Activated CD4-positive, alpha-beta memory T cell treated with anti-CD3 and anti-CD28 coated beads, Interleukin-2, amount 10 ng/mL, durations not matched to agents 7 days and 5 days (primary cell): ENCODE measurements at regions of chr1 and their contacts with region 1.

Region 1: DNA sequence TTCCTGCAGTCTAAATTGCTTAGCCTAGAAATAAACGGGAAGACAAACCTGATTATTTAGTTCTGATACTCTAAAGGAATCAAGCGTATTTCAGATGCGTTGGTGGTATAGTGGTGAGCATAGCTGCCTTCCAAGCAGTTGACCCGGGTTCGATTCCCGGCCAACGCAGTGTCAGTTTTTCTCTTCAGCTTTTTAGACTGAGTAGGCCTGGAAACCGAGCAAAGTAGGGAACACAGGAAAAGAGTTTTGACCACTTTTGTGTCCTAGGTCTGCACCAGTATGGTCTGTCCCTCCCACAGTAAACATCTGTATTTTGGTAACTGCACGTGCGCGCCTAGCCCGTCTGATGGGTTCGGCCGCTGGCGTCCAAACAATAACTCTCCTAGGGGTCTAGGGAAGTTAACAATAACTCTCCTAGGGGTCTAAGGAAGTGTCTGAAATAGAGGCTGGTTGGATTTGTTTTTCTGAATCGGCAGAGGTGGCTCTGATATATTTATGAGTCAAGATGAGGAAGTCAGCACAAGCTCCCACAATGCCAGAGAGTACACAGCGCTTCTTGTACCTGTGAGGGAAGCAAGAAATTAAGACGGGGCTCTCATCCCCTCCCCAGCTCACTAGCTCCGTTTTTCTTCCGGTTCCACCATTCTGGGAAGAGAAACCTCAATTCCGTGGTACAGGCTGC is 15.6 kb upstream of the HJV start:
- DNase-seq: peak; percentile 85
- H3K4me3 Mint-ChIP-seq: peak overlapping the region; percentile 90
- H3K27ac Mint-ChIP-seq: peak overlapping the region; percentile 93
- H3K4me1 Mint-ChIP-seq: peaks cover 51% of the 10 kb centered on the region
- H3K27me3 Mint-ChIP-seq: peaks cover 7% of the 10 kb centered on the region

Region 2: DNA sequence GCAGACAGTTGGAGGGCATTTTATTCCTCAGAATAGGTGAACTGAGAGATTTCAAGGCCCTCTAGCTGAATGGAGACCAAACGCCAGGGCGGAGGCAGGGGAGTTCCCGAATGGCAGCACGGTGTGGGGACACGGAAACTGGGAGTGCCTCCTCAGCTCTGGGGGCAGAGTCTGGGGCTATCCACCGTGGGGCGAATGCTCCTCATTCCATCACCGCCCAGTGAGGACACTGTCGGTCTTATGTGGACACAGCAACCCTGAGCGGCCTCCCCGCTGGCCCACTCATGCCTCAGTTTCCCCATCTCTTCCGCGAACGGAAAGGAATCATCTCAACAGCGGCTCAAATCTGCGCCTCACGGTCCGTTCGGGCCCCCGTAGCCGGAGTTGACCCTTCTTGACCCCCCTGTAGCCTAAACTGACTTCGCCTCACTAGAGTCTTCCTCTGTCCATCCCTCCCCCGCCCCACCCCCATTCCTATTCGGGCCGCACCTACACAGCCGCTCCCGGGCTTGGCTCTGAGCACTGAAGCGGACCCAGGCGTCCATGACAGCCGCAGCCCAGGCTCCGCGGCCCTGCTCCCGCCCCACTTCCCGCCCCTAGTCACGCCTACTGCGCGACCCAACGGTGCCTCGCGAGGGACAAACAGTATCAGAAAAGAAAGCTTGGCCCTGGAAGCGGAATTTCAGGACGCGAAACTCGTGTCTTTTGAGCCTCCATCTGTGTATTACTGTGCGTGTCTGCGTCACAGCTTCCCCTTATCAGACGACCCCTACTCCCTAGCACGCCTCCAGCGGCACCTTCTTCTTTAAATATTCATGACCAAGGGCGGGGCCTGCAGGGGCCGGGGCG is 118.7 kb before region 1 on chr1 and contains the start of gene PEX11B:
- CTCF ChIA-PET with region 1: interaction called, 3 read pairs
- POLR2A ChIA-PET with region 1: interaction called, 12 read pairs
- DNase-seq: peak; percentile 92
- H3K4me3 Mint-ChIP-seq: peak within 1 kb of the TSS; percentile 90
- H3K27ac Mint-ChIP-seq: peak within 1 kb of the TSS; percentile 94
- H3K4me1 Mint-ChIP-seq: peaks cover 47% of the 10 kb centered on the region
- H3K27me3 Mint-ChIP-seq: no peaks in the 10 kb centered on the region
- total RNA-seq, gene PEX11B: 29.0 to 33.2 TPM

Region 3: GRCh38 chr1:145963995-145964901 is 72.9 kb before region 1 on chr1 and contains the starts of genes ANKRD34A and POLR3GL:
- CTCF ChIA-PET with region 1: interaction called, 5 read pairs
- POLR2A ChIA-PET with region 1: interaction called, 45 read pairs
- DNase-seq: peak; percentile 95
- H3K4me3 Mint-ChIP-seq: peak within 1 kb of the TSS; percentile 96
- H3K27ac Mint-ChIP-seq: peak within 1 kb of the TSS; percentile 79
- H3K4me1 Mint-ChIP-seq: peaks cover 50% of the 10 kb centered on the region
- H3K27me3 Mint-ChIP-seq: peaks cover 5% of the 10 kb centered on the region
- total RNA-seq, gene ANKRD34A: 2.9 to 3.7 TPM
- total RNA-seq, gene POLR3GL: 32.4 to 33.7 TPM

Region 4: DNA sequence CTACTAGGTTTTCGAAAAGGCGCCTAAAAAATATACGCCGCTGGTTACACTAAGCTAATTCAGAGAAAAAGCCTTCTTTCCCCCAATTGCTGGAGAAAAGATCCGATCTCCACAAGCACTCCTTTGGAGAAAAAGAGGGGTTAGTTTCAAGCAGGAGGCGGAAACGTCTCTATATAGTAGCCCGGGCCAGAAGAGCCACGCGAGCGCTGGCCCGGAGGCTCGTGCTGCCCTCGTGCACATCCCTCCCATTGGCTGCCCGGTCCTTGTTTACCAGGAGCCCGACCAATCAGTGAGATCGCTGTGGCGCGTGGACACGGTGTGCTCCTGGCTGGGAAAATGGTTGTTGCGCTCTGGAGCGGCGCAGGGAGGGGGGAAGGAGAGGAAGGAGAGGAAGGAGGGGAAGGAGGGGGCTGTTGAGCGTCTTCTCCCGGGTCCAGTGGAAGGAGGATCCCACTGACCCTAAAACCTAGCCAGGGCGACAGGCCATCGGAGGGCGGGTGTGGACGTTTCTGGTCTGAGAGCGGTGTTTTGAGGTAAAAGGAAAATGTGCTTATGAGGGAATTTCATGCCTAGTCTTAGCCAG is 40.6 kb before region 1 on chr1 and contains the start of gene TXNIP:
- CTCF ChIA-PET with region 1: interaction called, 5 read pairs
- POLR2A ChIA-PET with region 1: interaction called, 38 read pairs
- DNase-seq: peak; percentile 96
- H3K4me3 Mint-ChIP-seq: peak within 1 kb of the TSS; percentile 93
- H3K27ac Mint-ChIP-seq: peak within 1 kb of the TSS; percentile 97
- H3K4me1 Mint-ChIP-seq: peaks cover 63% of the 10 kb centered on the region
- H3K27me3 Mint-ChIP-seq: no peaks in the 10 kb centered on the region
- total RNA-seq, gene TXNIP: 397 to 407 TPM

Region 5: GRCh38 chr1:146049436-146049835 is 12.3 kb after region 1 on chr1:
- CTCF ChIA-PET with region 1: interaction called, 15 read pairs
- POLR2A ChIA-PET with region 1: interaction called, 267 read pairs
- DNase-seq: no peak
- H3K4me3 Mint-ChIP-seq: no peak overlapping the region
- H3K27ac Mint-ChIP-seq: no peak overlapping the region
- H3K4me1 Mint-ChIP-seq: peaks cover 32% of the 10 kb centered on the region
- H3K27me3 Mint-ChIP-seq: no peaks in the 10 kb centered on the region